Thyroid gland (tissue), 4 donors: ENCODE measurements at regions of chr1 and their contacts with region 1.

Region 1: GRCh38 chr1:39196244-39197215 is 8.0 kb upstream of the MACF1 start:
- DNase-seq: no peak
- H3K4me3 ChIP-seq: no peak overlapping the region
- H3K27ac ChIP-seq: peak overlapping the region in 1 of 3 donors; percentile 34
- H3K4me1 ChIP-seq: peaks cover 10 to 62% of the 10 kb centered on the region in 2 donors
- H3K27me3 ChIP-seq: no peaks in the 10 kb centered on the region
- CTCF ChIP-seq: no peak
- POLR2A ChIP-seq: no peak

Region 2: DNA sequence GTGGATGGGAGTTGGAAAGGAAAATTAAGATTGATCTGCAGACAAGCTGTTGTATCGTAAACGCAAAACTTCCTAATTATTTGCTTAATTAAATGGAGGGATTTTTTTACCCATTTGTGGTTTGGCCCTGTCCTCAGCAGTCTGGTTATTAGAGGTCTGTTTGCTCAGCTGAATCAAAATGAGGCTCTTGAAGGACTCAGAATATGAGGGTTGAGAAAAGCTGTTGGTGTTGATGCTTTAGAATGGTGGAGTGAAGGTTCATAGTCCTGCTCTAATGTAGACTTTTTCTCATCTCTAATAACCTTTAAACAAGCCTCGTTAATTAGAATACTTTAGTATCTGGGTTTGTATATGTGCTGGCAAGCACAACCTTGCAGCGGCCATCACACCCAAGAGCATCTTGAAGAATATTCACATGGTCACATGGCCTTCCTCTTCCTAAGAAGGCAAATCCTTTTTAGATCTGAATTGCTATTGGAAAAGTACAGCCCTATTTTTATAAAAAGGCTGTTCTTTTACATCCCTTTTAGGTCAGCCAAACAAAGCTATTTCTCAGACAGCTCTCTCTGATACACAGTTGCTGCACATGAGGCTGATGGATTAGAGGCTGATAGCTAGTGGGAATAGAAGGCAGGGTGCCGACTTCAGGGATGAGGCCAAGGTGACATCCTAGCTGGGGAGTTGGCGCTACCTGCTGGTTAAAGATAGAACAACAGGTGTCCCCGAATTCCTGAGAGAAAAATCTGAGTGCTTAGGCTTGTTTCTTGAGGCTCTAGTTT is 61.8 kb after region 1 on chr1:
- intact Hi-C with region 1: loop called (anchors 5 kb)
- DNase-seq: peak; percentile 71 to 72
- H3K4me3 ChIP-seq: no peak overlapping the region
- H3K27ac ChIP-seq: peak overlapping the region in 1 of 3 donors; percentile 28
- H3K4me1 ChIP-seq: peaks cover 3% of the 10 kb centered on the region in 2 donors
- H3K27me3 ChIP-seq: no peaks in the 10 kb centered on the region
- CTCF ChIP-seq: peak; percentile 68 to 93 (median 84)
- POLR2A ChIP-seq: no peak

Region 3: GRCh38 chr1:39297551-39297950 is 101.0 kb after region 1 on chr1:
- intact Hi-C with region 1: no loop called
- DNase-seq: no peak
- H3K4me3 ChIP-seq: no peak overlapping the region
- H3K27ac ChIP-seq: no peak overlapping the region
- H3K4me1 ChIP-seq: peaks cover 9 to 11% of the 10 kb centered on the region in 2 donors
- H3K27me3 ChIP-seq: no peaks in the 10 kb centered on the region
- CTCF ChIP-seq: no peak
- POLR2A ChIP-seq: no peak